Natural killer cell (primary cell): ENCODE measurements at regions of chr4 and their contacts with region 1.

Region 1: DNA sequence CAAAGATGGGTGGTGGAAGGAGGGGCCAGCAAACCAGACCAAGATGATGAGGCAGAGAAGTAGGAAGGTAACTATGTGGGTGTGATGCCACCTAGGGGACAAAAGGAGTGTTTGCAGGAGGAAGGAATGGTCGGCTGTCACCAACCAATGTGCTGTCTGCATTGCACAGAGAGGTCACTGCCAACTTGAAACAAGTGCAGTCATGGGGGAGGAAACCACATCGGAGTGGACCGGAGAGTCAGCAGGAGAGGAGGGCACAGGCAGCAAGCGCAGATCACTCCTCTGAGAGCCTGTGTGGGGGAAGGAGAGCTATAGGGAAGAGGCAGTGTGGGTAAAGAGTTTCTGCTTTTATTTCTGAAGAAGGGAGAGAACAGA is 38.5 kb upstream of the FGFBP2 start:
- DNase-seq: peak; percentile 47 to 79
- ATAC-seq: peak; percentile 83 to 89 (median 88)
- H3K4me3 ChIP-seq: no peak overlapping the region
- H3K4me3 Mint-ChIP-seq: no peak overlapping the region
- H3K27ac ChIP-seq: no peak overlapping the region
- H3K27ac Mint-ChIP-seq: no peak overlapping the region
- H3K4me1 ChIP-seq: peaks cover 9% of the 10 kb centered on the region
- H3K4me1 Mint-ChIP-seq: peaks cover 5 to 6% of the 10 kb centered on the region in 2 donors
- H3K27me3 ChIP-seq: no peaks in the 10 kb centered on the region
- H3K27me3 Mint-ChIP-seq: no peaks in the 10 kb centered on the region
- CTCF ChIP-seq: peak; percentile 78

Region 2: GRCh38 chr4:15231265-15232091 is 770.0 kb before region 1 on chr4:
- intact Hi-C with region 1: loop called (anchors 5 kb)
- DNase-seq: peak; percentile 56 to 87
- ATAC-seq: peak; percentile 80 to 88 (median 84)
- H3K4me3 ChIP-seq: no peak overlapping the region
- H3K4me3 Mint-ChIP-seq: no peak overlapping the region
- H3K27ac ChIP-seq: no peak overlapping the region
- H3K27ac Mint-ChIP-seq: no peak overlapping the region
- H3K4me1 ChIP-seq: peaks cover 15% of the 10 kb centered on the region
- H3K4me1 Mint-ChIP-seq: peaks cover 32 to 33% of the 10 kb centered on the region in 2 donors
- H3K27me3 ChIP-seq: no peaks in the 10 kb centered on the region
- H3K27me3 Mint-ChIP-seq: no peaks in the 10 kb centered on the region
- CTCF ChIP-seq: peak; percentile 88

Region 3: GRCh38 chr4:15295421-15296162 is 705.9 kb before region 1 on chr4:
- intact Hi-C with region 1: no loop called
- DNase-seq: no peak
- ATAC-seq: no peak
- H3K4me3 ChIP-seq: no peak overlapping the region
- H3K4me3 Mint-ChIP-seq: no peak overlapping the region
- H3K27ac ChIP-seq: no peak overlapping the region
- H3K27ac Mint-ChIP-seq: no peak overlapping the region
- H3K4me1 ChIP-seq: no peaks in the 10 kb centered on the region
- H3K4me1 Mint-ChIP-seq: peaks cover 0 to 4% of the 10 kb centered on the region in 2 donors
- H3K27me3 ChIP-seq: no peaks in the 10 kb centered on the region
- H3K27me3 Mint-ChIP-seq: peaks cover 0 to 2% of the 10 kb centered on the region in 2 donors
- CTCF ChIP-seq: no peak

Region 4: DNA sequence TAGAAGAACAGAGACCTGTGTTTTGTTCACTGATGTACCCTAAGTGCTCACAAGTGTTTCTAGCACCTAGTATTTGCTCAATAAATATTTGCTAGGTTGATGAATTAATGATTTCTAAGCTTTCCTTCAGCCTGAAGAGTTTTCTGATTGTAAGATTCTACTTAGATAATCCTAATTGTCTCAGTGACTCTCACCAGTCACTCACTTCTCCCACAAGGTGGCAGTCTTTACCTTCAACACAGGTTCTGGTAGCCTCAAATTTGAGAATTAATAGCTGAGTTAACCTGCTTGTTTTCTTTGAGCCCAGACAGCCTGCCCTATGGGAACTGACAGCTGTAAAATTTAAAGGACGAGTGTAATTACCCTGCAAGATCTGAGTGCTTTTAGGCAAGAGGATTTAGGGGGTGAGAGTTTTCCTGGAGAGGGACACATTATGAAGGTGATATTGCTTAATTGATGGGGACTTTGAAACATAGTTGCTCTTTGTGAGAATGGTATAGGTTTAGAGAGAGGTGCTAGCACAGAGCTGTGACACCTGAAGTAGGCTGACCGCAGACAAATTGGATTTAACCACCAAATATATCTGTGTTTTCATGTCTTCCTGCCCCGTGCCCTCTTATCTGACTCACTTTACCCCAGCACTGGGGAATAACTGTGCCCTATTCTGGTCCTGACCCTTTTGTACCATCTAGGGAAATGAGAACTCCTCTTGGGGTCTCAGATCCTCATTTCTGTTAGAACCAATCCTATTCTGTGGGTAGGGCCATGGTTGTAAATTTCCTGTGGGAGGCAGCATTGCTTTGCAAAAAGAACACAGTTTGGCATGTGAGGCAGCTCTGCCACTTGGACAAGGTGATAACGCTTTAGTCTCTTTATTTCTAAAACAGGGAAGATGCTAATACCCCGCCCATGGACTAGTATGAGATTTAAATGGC is 195.6 kb before region 1 on chr4:
- intact Hi-C with region 1: loop called (anchors 1 kb)
- DNase-seq: peak in 1 of 2 donors; percentile 78
- ATAC-seq: peak; percentile 74 to 83 (median 77)
- H3K4me3 ChIP-seq: no peak overlapping the region
- H3K4me3 Mint-ChIP-seq: no peak overlapping the region
- H3K27ac ChIP-seq: no peak overlapping the region
- H3K27ac Mint-ChIP-seq: peak overlapping the region; percentile 24 to 54
- H3K4me1 ChIP-seq: peaks cover 13% of the 10 kb centered on the region
- H3K4me1 Mint-ChIP-seq: peaks cover 49 to 52% of the 10 kb centered on the region in 2 donors
- H3K27me3 ChIP-seq: no peaks in the 10 kb centered on the region
- H3K27me3 Mint-ChIP-seq: no peaks in the 10 kb centered on the region
- CTCF ChIP-seq: peak; percentile 78

Region 5: GRCh38 chr4:15882675-15883086 is 118.8 kb before region 1 on chr4:
- intact Hi-C with region 1: loop called (anchors 1 kb)
- DNase-seq: peak; percentile 41 to 81
- ATAC-seq: peak; percentile 92 to 97 (median 96)
- H3K4me3 ChIP-seq: no peak overlapping the region
- H3K4me3 Mint-ChIP-seq: peak overlapping the region; percentile 73
- H3K27ac ChIP-seq: no peak overlapping the region
- H3K27ac Mint-ChIP-seq: peak overlapping the region; percentile 54 to 68
- H3K4me1 ChIP-seq: peaks cover 16% of the 10 kb centered on the region
- H3K4me1 Mint-ChIP-seq: peaks cover 28% of the 10 kb centered on the region in 2 donors
- H3K27me3 ChIP-seq: no peaks in the 10 kb centered on the region
- H3K27me3 Mint-ChIP-seq: no peaks in the 10 kb centered on the region
- CTCF ChIP-seq: peak; percentile 88

Region 6: GRCh38 chr4:15956179-15956850 is 45.2 kb before region 1 on chr4:
- intact Hi-C with region 1: loop called (anchors 1 kb)
- DNase-seq: peak; percentile 75 to 86
- ATAC-seq: peak; percentile 82 to 91 (median 89)
- H3K4me3 ChIP-seq: no peak overlapping the region
- H3K4me3 Mint-ChIP-seq: peak overlapping the region; percentile 70
- H3K27ac ChIP-seq: no peak overlapping the region
- H3K27ac Mint-ChIP-seq: peak overlapping the region; percentile 81 to 83
- H3K4me1 ChIP-seq: peaks cover 16% of the 10 kb centered on the region
- H3K4me1 Mint-ChIP-seq: peaks cover 44 to 55% of the 10 kb centered on the region in 2 donors
- H3K27me3 ChIP-seq: no peaks in the 10 kb centered on the region
- H3K27me3 Mint-ChIP-seq: no peaks in the 10 kb centered on the region
- CTCF ChIP-seq: peak; percentile 86

Region 7: DNA sequence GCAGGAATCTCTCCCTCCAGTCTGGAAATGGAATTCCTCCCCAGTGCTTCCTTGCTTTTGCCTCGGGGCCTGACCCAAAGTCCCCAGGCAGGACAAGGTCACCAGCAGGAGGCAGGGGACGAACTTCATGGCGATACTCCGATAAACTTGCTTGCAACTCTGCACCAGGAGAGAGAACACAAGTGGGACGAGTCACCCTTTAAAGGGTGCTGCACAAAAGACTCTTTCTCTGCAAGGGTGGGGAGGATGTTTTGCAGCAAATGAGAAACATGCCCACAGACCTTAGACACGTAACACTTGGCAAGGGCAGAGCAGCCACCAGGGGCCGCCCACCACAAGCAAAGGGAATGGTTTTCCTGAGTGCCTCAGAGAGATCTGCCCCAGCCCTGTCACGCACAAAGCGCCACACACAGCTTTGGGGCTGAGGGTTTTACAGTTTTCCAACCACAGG is 38.4 kb before region 1 on chr4 and contains the start of gene FGFBP2:
- intact Hi-C with region 1: loop called (anchors 1 kb)
- DNase-seq: peak; percentile 67 to 83
- ATAC-seq: peak; percentile 51 to 72 (median 65)
- H3K4me3 ChIP-seq: peak within 1 kb of the TSS; percentile 61
- H3K4me3 Mint-ChIP-seq: peak within 1 kb of the TSS; percentile 89
- H3K27ac ChIP-seq: peak within 1 kb of the TSS; percentile 84
- H3K27ac Mint-ChIP-seq: peak within 1 kb of the TSS; percentile 94 to 95
- H3K4me1 ChIP-seq: peaks cover 42% of the 10 kb centered on the region
- H3K4me1 Mint-ChIP-seq: peaks cover 64 to 70% of the 10 kb centered on the region in 2 donors
- H3K27me3 ChIP-seq: no peaks in the 10 kb centered on the region
- H3K27me3 Mint-ChIP-seq: no peaks in the 10 kb centered on the region
- CTCF ChIP-seq: peak; percentile 43
- total RNA-seq, gene FGFBP2: 644 to 736 (median 713) TPM